Activated T-helper 1 cell treated with anti-CD3 and anti-CD28 coated beads, Interleukin-12 subunit alpha, Interleukin-12 subunit beta, Interleukin-2, Interleukin-4 antibody, amounts not matched to agents 30 ng/mL and 10 ng/mL and 1 ng/mL, durations not matched to agents 14 hours and 24 hours and 36 hours (primary cell): ENCODE measurements at regions of chr1 and their contacts with region 1.

Region 1: DNA sequence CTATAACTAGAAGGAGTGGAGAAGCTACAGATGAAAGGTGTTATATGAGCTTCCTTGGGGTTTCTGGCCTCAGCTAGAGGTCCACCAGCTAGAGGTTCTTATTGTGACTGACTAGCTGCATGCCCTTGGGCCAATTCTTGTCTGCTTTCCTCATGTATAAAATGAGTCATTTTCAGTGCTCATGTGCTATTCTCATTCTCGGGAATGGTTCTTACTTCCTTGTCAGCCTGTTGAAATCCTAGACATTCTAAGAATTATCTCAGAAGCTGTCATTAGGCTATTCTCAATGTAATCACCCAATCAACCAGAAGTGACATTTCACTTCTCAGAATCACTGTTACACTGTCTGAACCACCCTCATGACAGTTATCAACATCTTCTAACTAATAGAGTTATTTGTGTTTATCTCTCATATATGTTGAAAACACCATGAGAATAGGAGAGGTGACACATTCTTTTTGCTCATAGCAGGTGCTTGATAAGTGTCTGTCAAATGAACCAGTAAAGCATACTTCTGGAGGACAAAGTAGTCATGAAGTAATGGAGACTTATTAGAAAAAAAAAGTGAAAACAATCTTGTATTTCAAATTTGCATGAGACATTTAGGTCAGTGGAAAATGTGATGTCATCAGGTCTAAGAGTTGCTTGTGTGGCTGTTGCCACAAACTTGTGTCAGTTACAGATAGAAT is 122.8 kb upstream of the IVNS1ABP start:
- DNase-seq: peak; percentile 44
- H3K4me3 Mint-ChIP-seq: no peak overlapping the region
- H3K27ac Mint-ChIP-seq: no peak overlapping the region
- H3K4me1 Mint-ChIP-seq: peaks cover 27% of the 10 kb centered on the region
- H3K27me3 Mint-ChIP-seq: no peaks in the 10 kb centered on the region

Region 2: GRCh38 chr1:185044981-185045813 is 394.7 kb before region 1 on chr1 and contains the start of gene RNF2:
- intact Hi-C with region 1: loop called (anchors 10 kb)
- DNase-seq: peak; percentile 65
- H3K4me3 Mint-ChIP-seq: peak within 1 kb of the TSS; percentile 89
- H3K27ac Mint-ChIP-seq: peak within 1 kb of the TSS; percentile 82
- H3K4me1 Mint-ChIP-seq: peaks cover 29% of the 10 kb centered on the region
- H3K27me3 Mint-ChIP-seq: peaks cover 15% of the 10 kb centered on the region
- total RNA-seq, gene RNF2: 24.1 and 24.4 TPM in 2 replicates

Region 3: DNA sequence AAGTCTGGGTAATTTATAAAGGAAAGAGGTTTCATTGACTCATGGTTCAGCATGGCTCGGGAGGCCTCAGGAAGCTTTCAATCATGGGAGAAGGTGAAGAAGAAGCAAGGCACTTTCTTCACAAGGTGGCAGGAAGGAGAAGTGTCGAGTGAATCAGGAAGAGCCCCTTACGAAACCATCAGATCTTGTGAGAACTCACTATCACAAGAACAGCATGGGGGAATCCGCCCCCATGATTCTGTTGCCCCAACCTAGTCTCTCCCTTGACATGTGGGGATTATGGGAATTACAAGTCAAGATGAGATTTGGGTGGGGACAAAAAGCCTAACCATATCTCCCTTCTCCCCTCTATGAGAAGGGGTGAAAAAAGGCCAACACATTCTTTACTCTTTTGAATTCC is 111.6 kb before region 1 on chr1:
- intact Hi-C with region 1: no loop called
- DNase-seq: no peak
- H3K4me3 Mint-ChIP-seq: no peak overlapping the region
- H3K27ac Mint-ChIP-seq: no peak overlapping the region
- H3K4me1 Mint-ChIP-seq: peaks cover 7% of the 10 kb centered on the region
- H3K27me3 Mint-ChIP-seq: no peaks in the 10 kb centered on the region

Region 4: DNA sequence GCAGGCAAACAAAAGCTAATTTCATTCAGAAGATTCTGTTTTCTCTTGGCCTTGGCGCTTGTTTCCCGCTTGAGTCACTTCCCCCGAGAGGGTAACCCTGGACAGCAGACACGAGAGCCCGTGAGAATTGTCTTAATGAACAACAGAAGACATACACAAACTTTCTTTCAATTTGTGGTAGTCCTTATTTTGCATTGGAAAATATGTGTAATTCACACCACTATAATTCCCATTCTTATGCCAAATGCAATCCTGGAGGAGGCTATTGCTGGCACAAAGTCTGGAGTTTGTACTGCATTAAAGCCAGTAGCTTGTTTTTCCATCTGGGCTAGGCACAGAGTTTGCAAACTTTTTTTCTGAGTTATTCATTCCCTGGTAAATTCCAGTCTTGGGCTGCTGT is 13.0 kb before region 1 on chr1:
- intact Hi-C with region 1: loop called (anchors 1 kb)
- DNase-seq: no peak
- H3K4me3 Mint-ChIP-seq: no peak overlapping the region
- H3K27ac Mint-ChIP-seq: no peak overlapping the region
- H3K4me1 Mint-ChIP-seq: peaks cover 58% of the 10 kb centered on the region
- H3K27me3 Mint-ChIP-seq: no peaks in the 10 kb centered on the region

Region 5: GRCh38 chr1:185453496-185454192 is 13.8 kb after region 1 on chr1:
- intact Hi-C with region 1: no loop called
- DNase-seq: no peak
- H3K4me3 Mint-ChIP-seq: no peak overlapping the region
- H3K27ac Mint-ChIP-seq: no peak overlapping the region
- H3K4me1 Mint-ChIP-seq: peaks cover 7% of the 10 kb centered on the region
- H3K27me3 Mint-ChIP-seq: peaks cover 3% of the 10 kb centered on the region

Region 6: GRCh38 chr1:185490924-185491323 is 51.1 kb after region 1 on chr1:
- intact Hi-C with region 1: no loop called
- DNase-seq: no peak
- H3K4me3 Mint-ChIP-seq: no peak overlapping the region
- H3K27ac Mint-ChIP-seq: no peak overlapping the region
- H3K4me1 Mint-ChIP-seq: peaks cover 14% of the 10 kb centered on the region
- H3K27me3 Mint-ChIP-seq: peaks cover 2% of the 10 kb centered on the region

Region 7: GRCh38 chr1:185559684-185560331 is 119.9 kb after region 1 on chr1:
- intact Hi-C with region 1: loop called (anchors 1 kb)
- DNase-seq: peak; percentile 74
- H3K4me3 Mint-ChIP-seq: peak overlapping the region; percentile 52
- H3K27ac Mint-ChIP-seq: peak overlapping the region; percentile 66
- H3K4me1 Mint-ChIP-seq: peaks cover 52% of the 10 kb centered on the region
- H3K27me3 Mint-ChIP-seq: no peaks in the 10 kb centered on the region

Region 8: GRCh38 chr1:185608177-185608576 is 168.3 kb after region 1 on chr1:
- intact Hi-C with region 1: no loop called
- DNase-seq: no peak
- H3K4me3 Mint-ChIP-seq: no peak overlapping the region
- H3K27ac Mint-ChIP-seq: no peak overlapping the region
- H3K4me1 Mint-ChIP-seq: no peaks in the 10 kb centered on the region
- H3K27me3 Mint-ChIP-seq: peaks cover 3% of the 10 kb centered on the region

Region 9: GRCh38 chr1:185681034-185681633 is 241.3 kb after region 1 on chr1:
- intact Hi-C with region 1: loop called (anchors 5 kb)
- DNase-seq: peak; percentile 20
- H3K4me3 Mint-ChIP-seq: no peak overlapping the region
- H3K27ac Mint-ChIP-seq: no peak overlapping the region
- H3K4me1 Mint-ChIP-seq: peaks cover 21% of the 10 kb centered on the region
- H3K27me3 Mint-ChIP-seq: peaks cover 14% of the 10 kb centered on the region